ENCODE measurements at regions of chr9 and their contacts with region 1.

Region 1: DNA sequence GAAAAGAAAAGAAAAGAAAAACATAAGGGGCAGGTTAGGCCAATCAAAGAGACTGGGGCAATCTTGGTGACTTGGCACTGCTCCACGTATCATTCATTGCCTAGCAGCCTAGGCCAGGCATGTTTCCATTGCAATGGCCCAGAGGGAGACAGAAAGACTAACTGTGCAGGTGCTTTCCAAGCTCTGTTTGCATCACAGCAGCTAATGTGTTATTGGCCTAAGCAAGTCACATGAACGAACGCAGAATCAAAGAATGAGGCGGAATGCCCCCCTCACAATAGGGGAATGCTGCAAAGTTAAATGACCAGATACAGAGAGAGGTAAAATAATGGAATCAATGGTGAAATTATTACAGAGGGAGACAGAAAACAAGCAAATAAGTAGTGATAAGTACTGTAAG is 11.1 kb upstream of the VPS13A start:
- DNase-seq: no peak
- ATAC-seq: no peak
- H3K4me3 ChIP-seq: no peak overlapping the region
- H3K27ac ChIP-seq: no peak overlapping the region
- H3K4me1 ChIP-seq: 0 out of 3 replicates have a peak, but pooled peaks cover 5% of the 10 kb centered on the region
- CTCF ChIP-seq: no peak
- EP300 ChIP-seq: no peak
- POLR2A ChIP-seq: no peak
- RAD21 ChIP-seq: no peak

Region 2: GRCh38 chr9:77149879-77150278 is 16.3 kb before region 1 on chr9:
- CTCF ChIA-PET with region 1: interaction called, 34 read pairs
- POLR2A ChIA-PET with region 1: no interaction called
- DNase-seq: no peak
- ATAC-seq: no peak
- H3K4me3 ChIP-seq: no peak overlapping the region
- H3K27ac ChIP-seq: no peak overlapping the region
- H3K4me1 ChIP-seq: no peaks in the 10 kb centered on the region
- CTCF ChIP-seq: no peak
- EP300 ChIP-seq: no peak
- POLR2A ChIP-seq: no peak
- RAD21 ChIP-seq: no peak

Region 3: DNA sequence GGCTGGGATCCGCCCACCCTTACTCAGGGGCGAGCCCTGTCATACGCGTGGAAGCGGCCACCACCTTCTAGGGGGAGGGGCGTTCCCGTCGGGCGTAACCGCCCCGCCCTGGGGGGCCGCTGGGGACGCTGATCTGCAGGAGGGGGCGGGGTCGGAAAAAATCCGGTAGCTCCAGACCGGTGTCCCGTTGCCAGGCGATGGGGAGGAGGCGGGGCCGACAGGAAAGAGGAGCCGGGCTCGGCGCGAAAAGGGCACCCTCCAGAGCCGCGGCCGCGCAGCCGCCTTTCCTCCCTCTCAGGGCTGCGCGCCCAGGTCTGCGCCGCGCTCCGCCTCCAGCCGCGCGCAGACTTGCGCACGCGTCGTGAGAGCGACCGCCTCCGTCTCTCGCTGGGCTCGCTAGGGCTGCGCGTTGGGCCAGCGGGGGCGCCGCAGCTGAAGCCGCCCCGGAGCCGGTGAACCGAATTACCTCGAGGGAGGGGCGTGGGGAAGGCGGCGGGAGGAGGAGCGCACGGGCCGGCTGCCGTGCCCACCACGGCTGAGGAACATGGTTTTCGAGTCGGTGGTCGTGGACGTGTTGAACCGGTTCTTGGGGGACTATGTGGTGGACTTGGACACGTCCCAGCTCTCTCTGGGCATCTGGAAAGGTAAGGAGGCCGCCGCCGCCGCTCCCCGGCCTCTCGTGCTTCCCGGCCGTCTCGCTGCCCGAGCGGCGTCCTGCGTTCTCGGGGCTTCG is 11.1 kb after region 1 on chr9 and contains the start of gene VPS13A:
- CTCF ChIA-PET with region 1: interaction called, 35 read pairs
- POLR2A ChIA-PET with region 1: no interaction called
- DNase-seq: peak; percentile 84 to 94
- ATAC-seq: peak; percentile 84 to 97
- H3K4me3 ChIP-seq: peak within 1 kb of the TSS; percentile 85
- H3K27ac ChIP-seq: peak within 1 kb of the TSS; percentile 87 to 92
- H3K4me1 ChIP-seq: peaks cover 29% of the 10 kb centered on the region
- CTCF ChIP-seq: peak; percentile 19; the same call in 1 of the 3 replicates
- EP300 ChIP-seq: no peak
- POLR2A ChIP-seq: peak; percentile 75
- RAD21 ChIP-seq: no peak
- polyA plus RNA-seq, gene VPS13A: 42.0 and 66.6 TPM in 2 replicates

Region 4: GRCh38 chr9:77215874-77216273 is 49.7 kb after region 1 on chr9:
- CTCF ChIA-PET with region 1: interaction called, 17 read pairs
- POLR2A ChIA-PET with region 1: no interaction called
- DNase-seq: peak in 1 of 2 experiments; percentile 37
- ATAC-seq: peak; percentile 68 to 80; a peak in 5 of 6 replicates
- H3K4me3 ChIP-seq: no peak overlapping the region
- H3K27ac ChIP-seq: no peak overlapping the region
- H3K4me1 ChIP-seq: peaks cover 12% of the 10 kb centered on the region; the same call in 1 of the 3 replicates
- CTCF ChIP-seq: peak; percentile 42; the same call in 2 of the 3 replicates
- EP300 ChIP-seq: no peak
- POLR2A ChIP-seq: no peak
- RAD21 ChIP-seq: peak; percentile 45 to 56

Region 5: GRCh38 chr9:77261605-77262004 is 95.4 kb after region 1 on chr9:
- CTCF ChIA-PET with region 1: no interaction called
- POLR2A ChIA-PET with region 1: no interaction called
- DNase-seq: no peak
- ATAC-seq: no peak
- H3K4me3 ChIP-seq: no peak overlapping the region
- H3K27ac ChIP-seq: no peak overlapping the region
- H3K4me1 ChIP-seq: no peaks in the 10 kb centered on the region
- CTCF ChIP-seq: no peak
- EP300 ChIP-seq: no peak
- POLR2A ChIP-seq: no peak
- RAD21 ChIP-seq: no peak

Measured in A549 (cell line).